Activated CD4-positive, alpha-beta T cell treated with anti-CD3 and anti-CD28 coated beads, Interleukin-2, amount 10 ng/mL, durations not matched to agents 24 days and 14 days (primary cell): ENCODE measurements at regions of chr1 and their contacts with region 1.

Region 1: DNA sequence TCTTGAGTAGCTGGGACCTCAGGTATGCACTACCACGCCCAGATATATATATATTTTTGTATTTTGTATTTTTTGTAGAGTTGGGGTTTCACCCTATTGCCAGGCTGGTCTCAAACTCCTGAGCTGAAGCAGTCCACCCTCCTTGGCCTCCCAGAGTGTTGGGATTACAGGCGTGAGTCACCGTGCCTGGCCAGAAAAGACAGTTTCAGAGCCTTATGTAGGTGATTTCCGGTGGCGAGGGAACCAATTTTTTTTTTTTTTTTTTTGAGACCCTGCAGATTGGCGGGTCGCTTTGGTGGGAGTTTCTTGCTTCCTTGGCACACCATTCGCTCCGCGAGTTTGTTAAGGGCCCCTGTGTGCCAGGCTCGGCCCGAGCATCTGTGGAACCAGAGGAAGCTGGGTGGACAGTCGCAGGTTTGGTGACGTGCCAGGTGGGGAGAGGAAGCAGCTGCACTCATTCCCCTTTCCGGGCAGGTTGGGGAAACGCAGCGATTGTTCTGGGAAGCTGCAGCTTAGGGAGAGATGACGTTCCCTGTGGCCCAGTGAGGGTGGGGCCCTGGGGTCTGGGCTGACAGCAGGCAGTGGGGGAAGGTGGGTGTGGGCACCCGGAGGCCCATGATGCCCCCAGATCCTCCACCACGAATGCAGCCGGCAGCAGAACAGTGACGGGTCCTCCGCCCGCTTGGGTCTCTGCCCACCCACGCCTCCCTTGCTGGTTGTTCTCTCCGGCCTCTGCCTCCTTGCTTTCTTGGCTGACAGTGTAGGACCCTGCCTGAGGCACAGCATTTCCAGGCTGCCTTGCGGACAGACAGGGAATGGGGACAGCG is 25.1 kb downstream of the SPSB1 start:
- DNase-seq: peak; percentile 62
- H3K4me3 Mint-ChIP-seq: peak overlapping the region; percentile 40
- H3K27ac Mint-ChIP-seq: peak overlapping the region; percentile 68
- H3K4me1 Mint-ChIP-seq: peaks cover 50% of the 10 kb centered on the region
- H3K27me3 Mint-ChIP-seq: no peaks in the 10 kb centered on the region

Region 2: GRCh38 chr1:9275567-9276034 is 42.2 kb before region 1 on chr1:
- intact Hi-C with region 1: loop called (anchors 5 kb)
- DNase-seq: peak; percentile 86
- H3K4me3 Mint-ChIP-seq: peak overlapping the region; percentile 20
- H3K27ac Mint-ChIP-seq: peak overlapping the region; percentile 2
- H3K4me1 Mint-ChIP-seq: peaks cover 31% of the 10 kb centered on the region
- H3K27me3 Mint-ChIP-seq: no peaks in the 10 kb centered on the region

Region 3: DNA sequence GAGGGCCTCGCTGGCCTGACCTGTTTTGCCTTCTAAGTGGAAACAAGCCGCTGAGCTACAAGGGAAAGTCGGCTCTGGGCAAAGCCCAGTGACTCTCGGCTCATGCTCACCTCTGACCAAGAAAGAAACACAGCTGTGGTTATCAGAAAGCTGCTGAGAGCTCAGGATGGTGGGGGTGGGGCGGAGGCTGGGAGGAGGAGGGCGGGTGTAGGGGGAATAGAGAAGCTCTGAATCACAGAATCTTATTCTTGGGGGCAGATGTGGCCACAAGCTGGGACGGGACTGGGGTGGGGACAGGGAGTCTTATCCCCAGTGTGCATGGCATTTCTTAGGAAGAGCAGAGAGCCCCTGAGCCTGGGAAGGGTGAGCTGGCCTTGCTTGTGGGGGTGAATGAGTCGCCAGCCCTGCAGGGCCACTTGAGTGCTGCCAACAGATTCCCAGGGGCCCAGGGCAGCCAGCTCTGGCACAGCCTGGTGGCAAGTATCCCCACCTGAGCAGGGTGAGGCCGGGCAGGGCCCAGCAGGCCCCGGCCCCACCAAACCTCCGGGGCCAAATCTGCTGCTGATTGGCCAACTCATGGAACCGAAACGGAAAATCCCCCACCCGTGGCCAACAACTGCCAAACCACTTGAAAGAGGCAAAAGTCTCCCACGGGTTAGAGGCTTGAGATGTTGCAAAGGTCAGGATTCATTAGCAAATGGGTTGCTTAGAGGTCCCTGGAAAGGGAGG is 95.5 kb after region 1 on chr1:
- intact Hi-C with region 1: loop called (anchors 1 kb)
- DNase-seq: peak; percentile 85
- H3K4me3 Mint-ChIP-seq: peak overlapping the region; percentile 65
- H3K27ac Mint-ChIP-seq: peak overlapping the region; percentile 77
- H3K4me1 Mint-ChIP-seq: peaks cover 46% of the 10 kb centered on the region
- H3K27me3 Mint-ChIP-seq: peaks cover 12% of the 10 kb centered on the region

Region 4: DNA sequence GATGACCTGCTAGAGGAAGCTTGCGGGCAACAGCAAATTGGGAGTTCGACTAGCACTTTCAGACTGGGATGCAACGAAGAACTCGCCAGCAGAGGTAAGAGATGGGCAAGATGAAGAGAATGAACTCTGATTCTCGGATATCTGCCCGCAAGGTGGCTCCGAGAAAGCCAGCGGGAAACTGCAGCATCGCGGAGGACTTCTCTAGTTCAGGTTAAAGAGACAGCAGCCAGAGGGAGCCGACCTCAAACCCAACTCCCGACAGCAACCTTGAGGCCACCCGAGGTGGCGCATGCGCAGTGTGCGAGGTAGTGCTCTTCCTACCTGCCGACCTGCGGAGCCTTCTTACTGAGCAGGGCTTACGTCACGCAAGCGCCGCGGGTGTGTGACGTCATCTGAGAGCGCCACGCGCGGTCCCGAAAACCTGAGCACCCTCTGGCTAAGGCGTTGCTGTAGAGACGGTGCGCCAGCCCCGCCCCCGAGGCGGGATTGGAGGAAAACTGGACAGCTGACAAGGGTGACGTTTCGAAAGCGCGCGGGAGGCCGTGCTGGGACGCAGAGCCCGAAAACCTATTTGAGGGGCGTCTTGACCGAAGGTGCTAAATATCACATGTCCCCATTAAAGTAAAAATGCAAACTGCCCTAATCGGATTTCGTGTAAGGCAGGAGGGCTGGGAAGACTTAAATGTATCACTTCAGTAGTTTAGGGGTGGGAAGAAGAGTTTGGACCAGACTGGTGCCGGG is 111.0 kb after region 1 on chr1:
- intact Hi-C with region 1: loop called (anchors 5 kb)
- DNase-seq: peak; percentile 100
- H3K4me3 Mint-ChIP-seq: peak overlapping the region; percentile 97
- H3K27ac Mint-ChIP-seq: peak overlapping the region; percentile 97
- H3K4me1 Mint-ChIP-seq: peaks cover 45% of the 10 kb centered on the region
- H3K27me3 Mint-ChIP-seq: peaks cover 13% of the 10 kb centered on the region